Esophagus squamous epithelium (tissue), 5 donors: ENCODE measurements at regions of chr12 and their contacts with region 1.

Region 1: DNA sequence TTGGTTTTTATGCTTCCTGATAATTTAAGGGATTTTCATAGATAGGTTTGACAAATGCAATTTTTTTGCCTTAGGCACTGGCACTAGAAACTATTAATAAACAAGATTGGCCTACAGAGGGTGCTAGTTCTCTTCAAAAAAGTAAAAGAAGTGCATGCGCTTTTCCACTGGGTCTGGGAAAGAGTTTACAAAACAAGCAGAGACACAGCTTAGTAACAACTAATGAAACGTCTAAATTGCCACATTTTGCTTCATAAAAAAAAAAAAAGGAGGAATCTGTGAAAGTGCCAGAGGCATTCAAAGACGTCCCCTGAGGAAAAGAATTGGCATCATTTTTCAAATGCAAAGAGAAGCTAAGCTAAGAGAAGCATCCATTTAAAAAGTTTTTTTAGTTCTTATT is 58.3 kb upstream of the EEA1 start:
- DNase-seq: no peak
- H3K4me3 ChIP-seq: no peak overlapping the region
- H3K27ac ChIP-seq: peak overlapping the region; percentile 18 to 70 (median 54)
- H3K4me1 ChIP-seq: peaks cover 5 to 26% (median 12%) of the 10 kb centered on the region in 3 donors
- H3K27me3 ChIP-seq: no peaks in the 10 kb centered on the region
- CTCF ChIP-seq: peak in 5 of 6 experiments; percentile 56 to 71 (median 59)
- POLR2A ChIP-seq: no peak

Region 2: DNA sequence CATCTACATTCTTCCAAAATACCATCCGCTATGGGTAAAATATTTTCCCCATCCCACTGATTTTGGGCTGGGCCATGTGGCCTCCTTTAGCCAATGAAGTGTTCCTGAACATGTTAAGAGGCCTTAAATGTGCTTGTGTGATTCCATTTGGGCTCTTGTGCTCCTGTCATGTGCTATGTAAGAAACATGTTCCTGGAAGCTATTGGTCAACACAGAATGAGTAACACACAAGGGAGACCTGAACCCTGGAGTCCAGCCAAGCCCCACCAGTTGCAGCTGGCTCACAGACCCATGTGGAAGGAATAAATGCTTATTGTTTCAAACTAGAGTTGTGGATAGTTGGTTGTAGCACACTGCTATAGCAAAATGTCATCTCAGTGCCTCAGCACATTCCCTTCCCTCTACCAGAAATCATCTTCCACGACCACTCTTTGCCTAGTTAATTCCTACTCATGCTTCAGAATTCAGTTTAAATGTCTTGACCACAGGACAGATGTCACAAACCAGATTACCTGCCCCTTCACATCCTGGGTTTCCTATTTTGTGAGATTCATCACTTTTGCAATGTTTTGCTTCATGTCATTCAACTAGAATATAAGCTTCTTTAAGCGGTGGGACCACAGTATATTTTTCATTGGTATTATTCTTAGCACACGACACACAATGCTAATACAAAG is 159.0 kb after region 1 on chr12:
- intact Hi-C with region 1: no loop called
- DNase-seq: no peak
- H3K4me3 ChIP-seq: no peak overlapping the region
- H3K27ac ChIP-seq: no peak overlapping the region
- H3K4me1 ChIP-seq: peaks cover 4 to 18% (median 5%) of the 10 kb centered on the region in 3 donors
- H3K27me3 ChIP-seq: no peaks in the 10 kb centered on the region
- CTCF ChIP-seq: no peak
- POLR2A ChIP-seq: no peak

Region 3: GRCh38 chr12:93397412-93397811 is 410.1 kb after region 1 on chr12:
- intact Hi-C with region 1: loop called (anchors 5 kb)
- DNase-seq: no peak
- H3K4me3 ChIP-seq: no peak overlapping the region
- H3K27ac ChIP-seq: no peak overlapping the region
- H3K4me1 ChIP-seq: peaks cover 0 to 3% (median 0%) of the 10 kb centered on the region in 3 donors
- H3K27me3 ChIP-seq: no peaks in the 10 kb centered on the region
- CTCF ChIP-seq: no peak
- POLR2A ChIP-seq: no peak